ENCODE measurements at regions of chr1 and their contacts with region 1.

Region 1: GRCh38 chr1:248837794-248838356 is at the start of gene ZNF672:
- DNase-seq: peak; percentile 96
- ATAC-seq: peak; percentile 89
- H3K4me3 Mint-ChIP-seq: no peak within 1 kb of the TSS
- H3K27ac Mint-ChIP-seq: peak within 1 kb of the TSS; percentile 93
- H3K4me1 Mint-ChIP-seq: peaks cover 24% of the 10 kb centered on the region
- H3K27me3 Mint-ChIP-seq: no peaks in the 10 kb centered on the region
- total RNA-seq, gene ZNF672: 39.5 to 49.4 TPM

Region 2: GRCh38 chr1:248268178-248268577 is 569.7 kb before region 1 on chr1:
- CTCF ChIA-PET with region 1: no interaction called
- POLR2A ChIA-PET with region 1: no interaction called
- intact Hi-C with region 1: no loop called
- DNase-seq: no peak
- ATAC-seq: no peak
- H3K4me3 Mint-ChIP-seq: no peak overlapping the region
- H3K27ac Mint-ChIP-seq: no peak overlapping the region
- H3K4me1 Mint-ChIP-seq: no peaks in the 10 kb centered on the region
- H3K27me3 Mint-ChIP-seq: no peaks in the 10 kb centered on the region

Region 3: DNA sequence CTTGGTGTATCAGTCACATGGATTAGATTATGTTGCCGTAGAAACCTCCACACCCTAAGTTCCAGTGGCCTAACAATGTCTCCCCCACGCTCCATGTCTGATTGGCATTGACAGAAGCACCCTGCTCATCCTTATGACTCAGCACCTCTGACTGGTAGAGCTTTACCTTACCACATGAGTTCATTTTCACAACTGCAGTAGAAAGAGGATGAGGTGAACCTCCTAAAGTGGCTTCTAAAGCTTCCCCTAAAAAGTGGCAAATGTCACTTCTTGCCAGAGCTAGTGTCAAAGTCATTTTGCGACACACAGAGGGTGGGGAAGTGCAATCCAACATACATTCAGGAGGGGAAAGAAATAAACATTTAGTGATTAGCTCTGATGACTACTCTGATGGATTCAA is 51.7 kb before region 1 on chr1:
- CTCF ChIA-PET with region 1: no interaction called
- POLR2A ChIA-PET with region 1: no interaction called
- intact Hi-C with region 1: no loop called
- DNase-seq: no peak
- ATAC-seq: peak; percentile 74
- H3K4me3 Mint-ChIP-seq: no peak overlapping the region
- H3K27ac Mint-ChIP-seq: no peak overlapping the region
- H3K4me1 Mint-ChIP-seq: peaks cover 2% of the 10 kb centered on the region
- H3K27me3 Mint-ChIP-seq: peaks cover 7% of the 10 kb centered on the region

Region 4: DNA sequence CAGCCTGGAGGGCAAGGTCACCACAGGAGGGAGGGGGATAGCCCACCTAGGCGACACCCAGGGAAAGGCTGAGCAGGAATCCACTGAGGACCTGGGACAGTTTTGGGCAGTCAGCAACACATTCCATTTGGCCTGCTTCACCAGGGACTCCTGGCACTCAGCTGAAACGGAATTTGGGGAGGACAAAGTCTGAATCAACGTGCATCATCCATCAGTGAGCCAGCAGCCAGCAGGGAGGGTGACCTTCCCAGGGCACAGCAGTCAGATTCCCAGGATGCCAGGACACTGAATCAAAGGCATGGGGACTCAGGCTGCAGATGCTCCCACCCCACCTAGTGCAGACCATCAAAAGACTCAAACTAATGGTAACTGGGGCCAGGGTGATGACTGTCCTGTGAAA is 16.8 kb before region 1 on chr1:
- CTCF ChIA-PET with region 1: interaction called, 56 read pairs
- POLR2A ChIA-PET with region 1: interaction called, 29 read pairs
- intact Hi-C with region 1: loop called (anchors 1 kb)
- DNase-seq: no peak
- ATAC-seq: no peak
- H3K4me3 Mint-ChIP-seq: no peak overlapping the region
- H3K27ac Mint-ChIP-seq: no peak overlapping the region
- H3K4me1 Mint-ChIP-seq: peaks cover 90% of the 10 kb centered on the region
- H3K27me3 Mint-ChIP-seq: no peaks in the 10 kb centered on the region

Region 5: GRCh38 chr1:248825909-248826760 is 11.7 kb before region 1 on chr1 and contains the start of gene SH3BP5L:
- CTCF ChIA-PET with region 1: interaction called, 56 read pairs
- POLR2A ChIA-PET with region 1: interaction called, 29 read pairs
- intact Hi-C with region 1: loop called (anchors 1 kb)
- DNase-seq: peak; percentile 95
- ATAC-seq: peak; percentile 92
- H3K4me3 Mint-ChIP-seq: peak within 1 kb of the TSS; percentile 85
- H3K27ac Mint-ChIP-seq: peak within 1 kb of the TSS; percentile 99
- H3K4me1 Mint-ChIP-seq: peaks cover 53% of the 10 kb centered on the region
- H3K27me3 Mint-ChIP-seq: no peaks in the 10 kb centered on the region
- total RNA-seq, gene SH3BP5L: 20.1 to 21.3 TPM

Region 6: GRCh38 chr1:248858891-248859889 is 21.3 kb after region 1 on chr1 and contains the start of gene ZNF692:
- CTCF ChIA-PET with region 1: interaction called, 25 read pairs
- POLR2A ChIA-PET with region 1: interaction called, 13 read pairs
- intact Hi-C with region 1: loop called (anchors 1 kb)
- DNase-seq: peak; percentile 99
- ATAC-seq: peak; percentile 86
- H3K4me3 Mint-ChIP-seq: peak within 1 kb of the TSS; percentile 89
- H3K27ac Mint-ChIP-seq: peak within 1 kb of the TSS; percentile 99
- H3K4me1 Mint-ChIP-seq: peaks cover 55% of the 10 kb centered on the region
- H3K27me3 Mint-ChIP-seq: no peaks in the 10 kb centered on the region
- total RNA-seq, gene ZNF692: 75.9 to 92.3 TPM

Region 7: GRCh38 chr1:248873409-248873992 is 35.6 kb after region 1 on chr1:
- CTCF ChIA-PET with region 1: interaction called, 8 read pairs
- POLR2A ChIA-PET with region 1: no interaction called
- intact Hi-C with region 1: loop called (anchors 1 kb)
- DNase-seq: peak; percentile 95
- ATAC-seq: peak; percentile 83
- H3K4me3 Mint-ChIP-seq: peak overlapping the region; percentile 87
- H3K27ac Mint-ChIP-seq: peak overlapping the region; percentile 94
- H3K4me1 Mint-ChIP-seq: peaks cover 25% of the 10 kb centered on the region
- H3K27me3 Mint-ChIP-seq: no peaks in the 10 kb centered on the region

Region 8: GRCh38 chr1:248906009-248906752 is 68.3 kb after region 1 on chr1 and contains the start of gene PGBD2:
- CTCF ChIA-PET with region 1: interaction called, 3 read pairs
- POLR2A ChIA-PET with region 1: no interaction called
- intact Hi-C with region 1: loop called (anchors 1 kb)
- DNase-seq: peak; percentile 98
- ATAC-seq: peak; percentile 87
- H3K4me3 Mint-ChIP-seq: peak within 1 kb of the TSS; percentile 79
- H3K27ac Mint-ChIP-seq: peak within 1 kb of the TSS; percentile 98
- H3K4me1 Mint-ChIP-seq: peaks cover 8% of the 10 kb centered on the region
- H3K27me3 Mint-ChIP-seq: no peaks in the 10 kb centered on the region
- total RNA-seq, gene PGBD2: 2.3 to 2.9 TPM